ENCODE measurements at regions of chr19 and their contacts with region 1.

Region 1: GRCh38 chr19:44943801-44944249 is 1.8 kb downstream of the APOC4 start:
- DNase-seq: peak; percentile 46
- ATAC-seq: peak; percentile 67 to 72

Region 2: GRCh38 chr19:44789943-44790483 is 153.8 kb before region 1 on chr19:
- intact Hi-C with region 1: loop called in 1 of 2 experiments (anchors 5 kb)
- DNase-seq: no peak
- ATAC-seq: no peak

Region 3: GRCh38 chr19:45069056-45069455 is 125.2 kb after region 1 on chr19:
- intact Hi-C with region 1: no loop called
- DNase-seq: no peak
- ATAC-seq: peak in 1 of 2 donors; percentile 42

Measured in left cardiac atrium (tissue), 4 donors.